H1 (cell line): ENCODE measurements at regions of chr7 and their contacts with region 1.

Region 1: DNA sequence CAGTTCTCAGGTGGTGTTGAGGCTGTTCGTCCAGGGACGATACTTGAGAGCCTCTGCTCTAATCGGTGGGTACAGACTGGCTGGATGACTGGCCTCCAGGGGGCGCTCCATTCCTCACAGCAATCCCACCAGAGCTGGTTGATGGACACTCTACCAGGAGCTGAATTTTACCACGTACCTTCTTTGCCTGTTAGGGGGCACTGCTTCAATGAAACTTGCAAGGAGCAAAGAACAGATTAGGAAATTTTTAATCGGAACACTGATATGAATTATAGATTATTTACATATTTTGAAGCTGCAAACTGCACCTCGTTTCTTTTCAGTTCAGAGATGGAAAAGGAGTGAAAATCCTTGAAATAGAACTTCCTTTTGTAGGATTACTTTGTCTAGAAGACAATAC is 44.9 kb downstream of the KBTBD2 start:
- DNase-seq: peak; percentile 76 to 95
- H3K4me3 ChIP-seq: no peak overlapping the region
- H3K27ac ChIP-seq: no peak overlapping the region
- H3K4me1 ChIP-seq: peaks cover 0 to 3% (median 0%) of the 10 kb centered on the region in 4 experiments; a peak in 2 of 7 replicates
- H3K27me3 ChIP-seq: no peaks in the 10 kb centered on the region
- CTCF ChIP-seq: peak; percentile 81 to 97 (median 86)
- EP300 ChIP-seq: no peak
- POLR2A ChIP-seq: no peak
- RAD21 ChIP-seq: peak; percentile 70 to 76

Region 2: DNA sequence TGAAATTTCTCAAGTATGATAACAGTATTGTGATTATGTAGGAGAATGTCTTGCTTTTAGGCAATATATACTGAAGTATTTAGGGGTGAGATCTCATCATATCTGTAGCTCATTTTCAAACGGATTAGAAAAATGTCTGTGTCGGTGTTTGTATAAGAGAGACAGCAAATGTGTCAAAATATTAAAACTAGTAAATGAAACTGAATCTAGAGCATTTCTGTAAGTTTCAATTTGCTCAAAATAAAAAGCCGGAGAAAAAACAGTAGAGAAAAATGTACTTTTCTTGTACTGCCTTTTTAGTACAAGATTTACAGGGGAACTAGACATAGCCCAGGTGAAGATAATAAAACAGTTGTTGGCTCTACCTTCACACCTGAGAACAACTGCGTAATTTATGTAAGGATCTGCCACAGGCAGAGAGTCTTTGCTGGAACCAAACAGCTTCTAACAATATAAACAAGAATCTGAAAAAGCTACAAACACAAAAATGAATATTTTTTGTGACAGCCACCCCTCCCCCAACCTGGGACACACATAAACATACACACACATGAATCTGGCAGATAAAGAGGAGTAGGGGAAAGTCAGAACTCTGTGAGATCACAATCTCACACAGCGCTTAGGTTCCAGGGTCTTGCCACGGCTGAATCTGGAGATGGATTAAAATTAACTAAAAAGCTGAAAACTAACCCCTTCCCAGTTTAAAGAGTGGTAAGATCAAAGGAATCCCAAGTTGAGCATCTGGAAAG is 198.1 kb before region 1 on chr7:
- CTCF ChIA-PET with region 1: no interaction called
- POLR2A ChIA-PET with region 1: no interaction called
- DNase-seq: no peak
- H3K4me3 ChIP-seq: no peak overlapping the region
- H3K27ac ChIP-seq: no peak overlapping the region
- H3K4me1 ChIP-seq: no peaks in the 10 kb centered on the region; a peak in 1 of 7 replicates
- H3K27me3 ChIP-seq: peaks cover 0 to 1% (median 0%) of the 10 kb centered on the region in 4 experiments; a peak in 1 of 7 replicates
- CTCF ChIP-seq: no peak
- EP300 ChIP-seq: no peak
- POLR2A ChIP-seq: no peak
- RAD21 ChIP-seq: no peak

Region 3: GRCh38 chr7:32802305-32802910 is 44.3 kb before region 1 on chr7:
- CTCF ChIA-PET with region 1: interaction called, 13 read pairs
- POLR2A ChIA-PET with region 1: no interaction called
- DNase-seq: no peak
- H3K4me3 ChIP-seq: no peak overlapping the region
- H3K27ac ChIP-seq: no peak overlapping the region
- H3K4me1 ChIP-seq: no peaks in the 10 kb centered on the region
- H3K27me3 ChIP-seq: no peaks in the 10 kb centered on the region
- CTCF ChIP-seq: no peak
- EP300 ChIP-seq: no peak
- POLR2A ChIP-seq: no peak
- RAD21 ChIP-seq: no peak

Region 4: DNA sequence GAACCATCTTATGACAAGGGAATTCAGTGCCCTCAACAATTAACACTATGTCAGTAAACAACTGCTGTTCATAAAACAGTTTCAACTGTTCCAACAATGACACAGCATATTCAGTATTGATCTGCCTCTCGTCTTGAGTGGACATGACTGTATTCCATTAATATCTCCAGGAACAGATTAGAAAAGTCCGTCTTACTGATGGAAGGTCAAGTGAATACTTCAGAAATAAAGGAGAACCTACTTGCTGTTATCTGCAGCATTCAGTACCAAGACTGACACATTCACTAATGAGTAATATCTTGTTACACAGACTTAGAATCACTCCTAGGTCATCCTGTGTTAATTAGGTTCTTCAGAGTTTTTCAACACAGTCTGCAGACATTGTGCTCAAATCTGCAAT is 32.8 kb after region 1 on chr7:
- CTCF ChIA-PET with region 1: interaction called, 13 read pairs
- POLR2A ChIA-PET with region 1: no interaction called
- DNase-seq: no peak
- H3K4me3 ChIP-seq: no peak overlapping the region
- H3K27ac ChIP-seq: no peak overlapping the region
- H3K4me1 ChIP-seq: no peaks in the 10 kb centered on the region
- H3K27me3 ChIP-seq: no peaks in the 10 kb centered on the region
- CTCF ChIP-seq: no peak
- EP300 ChIP-seq: no peak
- POLR2A ChIP-seq: no peak
- RAD21 ChIP-seq: no peak

Region 5: GRCh38 chr7:32905175-32905662 is 58.5 kb after region 1 on chr7:
- CTCF ChIA-PET with region 1: interaction called, 11 read pairs
- POLR2A ChIA-PET with region 1: no interaction called
- DNase-seq: peak in 1 of 2 experiments; percentile 68
- H3K4me3 ChIP-seq: peak overlapping the region; percentile 6 to 61 (median 37); a peak in 5 of 8 replicates
- H3K27ac ChIP-seq: no peak overlapping the region
- H3K4me1 ChIP-seq: peaks cover 0 to 4% (median 0%) of the 10 kb centered on the region in 4 experiments; a peak in 2 of 7 replicates
- H3K27me3 ChIP-seq: no peaks in the 10 kb centered on the region; a peak in 1 of 7 replicates
- CTCF ChIP-seq: no peak
- EP300 ChIP-seq: no peak
- POLR2A ChIP-seq: no peak
- RAD21 ChIP-seq: no peak

Region 6: GRCh38 chr7:32942786-32943653 is 96.3 kb after region 1 on chr7:
- CTCF ChIA-PET with region 1: interaction called, 21 read pairs
- POLR2A ChIA-PET with region 1: no interaction called
- DNase-seq: peak in 1 of 2 experiments; percentile 86
- H3K4me3 ChIP-seq: peak overlapping the region; percentile 14 to 58 (median 26); a peak in 7 of 8 replicates
- H3K27ac ChIP-seq: no peak overlapping the region
- H3K4me1 ChIP-seq: peaks cover 0 to 8% (median 2%) of the 10 kb centered on the region in 4 experiments; a peak in 6 of 7 replicates
- H3K27me3 ChIP-seq: peaks cover 45 to 85% (median 76%) of the 10 kb centered on the region in 4 experiments
- CTCF ChIP-seq: peak; percentile 43 to 87 (median 53)
- EP300 ChIP-seq: no peak
- POLR2A ChIP-seq: no peak
- RAD21 ChIP-seq: peak; percentile 55 to 85